ENCODE measurements at regions of chr5 and their contacts with region 1.

Region 1: DNA sequence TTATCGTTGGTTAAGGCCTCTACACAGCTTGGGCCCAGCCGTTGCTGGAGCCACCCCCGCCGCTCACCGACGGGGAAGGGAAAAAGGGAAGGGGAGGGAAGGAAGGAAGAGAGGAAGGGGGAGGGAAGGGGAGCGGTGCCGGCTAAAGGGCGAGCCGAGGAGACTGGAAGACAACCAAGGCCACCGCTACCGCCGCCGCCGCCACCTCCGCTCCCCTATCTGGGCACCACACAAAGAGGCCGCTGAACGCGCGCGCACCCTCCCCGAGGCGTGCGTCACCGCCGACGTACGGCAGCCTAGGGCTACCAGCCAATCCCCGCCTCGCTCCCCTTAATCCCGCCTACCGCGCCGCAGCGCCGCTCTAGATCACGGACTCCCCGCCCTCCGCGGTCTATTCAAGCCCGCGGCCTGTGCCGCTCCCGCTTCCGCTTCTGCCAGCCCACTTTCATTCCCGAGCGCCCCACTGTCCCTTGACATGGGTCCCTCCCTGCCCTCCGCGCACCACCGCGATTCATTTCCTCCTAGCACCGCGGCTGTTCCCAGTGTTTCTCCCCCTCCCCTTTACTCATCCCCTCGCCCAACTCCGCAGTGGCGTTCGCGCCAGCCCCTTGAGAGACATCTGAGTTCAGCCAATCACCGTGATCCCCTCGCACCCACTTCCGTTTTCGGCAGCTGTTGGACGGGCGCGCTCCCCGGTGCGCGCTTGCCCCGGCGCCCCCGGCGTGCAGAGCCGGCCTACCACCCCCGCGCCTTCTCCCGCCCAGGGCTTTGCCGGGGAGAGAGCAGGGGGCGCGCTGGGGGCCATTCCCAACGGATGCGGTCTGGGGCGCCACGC is at the start of gene HNRNPA0:
- DNase-seq: peak; percentile 96
- ATAC-seq: peak; percentile 92
- H3K4me3 Mint-ChIP-seq: peak within 1 kb of the TSS; percentile 95
- H3K27ac Mint-ChIP-seq: peak within 1 kb of the TSS; percentile 100
- H3K4me1 Mint-ChIP-seq: peaks cover 23% of the 10 kb centered on the region
- H3K27me3 Mint-ChIP-seq: peaks cover 29% of the 10 kb centered on the region
- CTCF ChIP-seq: no peak
- total RNA-seq, gene HNRNPA0: 65.6 to 66.6 TPM (median 66.0 TPM) in 3 replicates

Region 2: GRCh38 chr5:137672019-137672418 is 82.3 kb before region 1 on chr5:
- CTCF ChIA-PET with region 1: no interaction called
- POLR2A ChIA-PET with region 1: no interaction called
- DNase-seq: no peak
- ATAC-seq: no peak
- H3K4me3 Mint-ChIP-seq: no peak overlapping the region
- H3K27ac Mint-ChIP-seq: no peak overlapping the region
- H3K4me1 Mint-ChIP-seq: no peaks in the 10 kb centered on the region
- H3K27me3 Mint-ChIP-seq: no peaks in the 10 kb centered on the region
- CTCF ChIP-seq: no peak

Region 3: DNA sequence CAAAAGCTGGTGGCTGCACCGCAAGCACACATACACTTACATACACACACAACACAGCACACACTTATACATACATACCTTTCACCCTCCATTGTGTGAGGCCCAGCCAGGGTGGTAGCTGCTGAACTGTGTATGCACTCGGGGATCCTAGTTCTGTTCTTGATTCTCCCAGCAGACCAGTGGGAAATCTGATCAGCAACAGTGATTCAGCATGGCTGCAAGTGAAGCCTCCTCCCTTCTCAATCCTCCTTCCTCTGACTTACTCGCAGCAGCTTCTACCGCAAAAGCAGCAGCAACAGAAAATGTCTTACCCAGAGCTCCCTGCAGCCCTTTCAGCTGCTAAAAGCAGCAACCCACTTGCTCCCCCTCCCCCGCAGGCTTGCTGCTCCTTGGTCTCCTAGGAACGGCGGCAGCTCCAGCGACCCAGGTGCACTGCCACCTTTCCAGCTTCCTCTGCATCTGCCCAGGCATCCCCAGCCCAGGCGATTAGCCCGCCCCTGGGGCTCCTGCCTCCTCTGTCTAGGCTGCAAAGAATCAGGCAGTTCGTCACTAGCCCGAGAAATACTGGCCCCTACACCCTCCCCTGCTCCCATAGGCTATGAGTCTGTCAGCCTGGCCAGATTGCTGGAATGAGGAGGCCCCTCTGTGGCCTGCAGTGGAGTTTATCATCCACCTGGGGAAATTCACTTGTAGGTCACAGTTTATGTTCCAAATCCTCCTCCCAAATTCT is 18.6 kb before region 1 on chr5 and contains the start of gene KLHL3:
- CTCF ChIA-PET with region 1: interaction called, 26 read pairs
- POLR2A ChIA-PET with region 1: interaction called, 20 read pairs
- DNase-seq: peak; percentile 89
- ATAC-seq: peak; percentile 97
- H3K4me3 Mint-ChIP-seq: no peak within 1 kb of the TSS
- H3K27ac Mint-ChIP-seq: no peak within 1 kb of the TSS
- H3K4me1 Mint-ChIP-seq: peaks cover 3% of the 10 kb centered on the region
- H3K27me3 Mint-ChIP-seq: no peaks in the 10 kb centered on the region; the same call in 1 of the 2 replicates
- CTCF ChIP-seq: no peak
- total RNA-seq, gene KLHL3: 14.7 to 18.2 TPM (median 15.7 TPM) in 3 replicates

Region 4: DNA sequence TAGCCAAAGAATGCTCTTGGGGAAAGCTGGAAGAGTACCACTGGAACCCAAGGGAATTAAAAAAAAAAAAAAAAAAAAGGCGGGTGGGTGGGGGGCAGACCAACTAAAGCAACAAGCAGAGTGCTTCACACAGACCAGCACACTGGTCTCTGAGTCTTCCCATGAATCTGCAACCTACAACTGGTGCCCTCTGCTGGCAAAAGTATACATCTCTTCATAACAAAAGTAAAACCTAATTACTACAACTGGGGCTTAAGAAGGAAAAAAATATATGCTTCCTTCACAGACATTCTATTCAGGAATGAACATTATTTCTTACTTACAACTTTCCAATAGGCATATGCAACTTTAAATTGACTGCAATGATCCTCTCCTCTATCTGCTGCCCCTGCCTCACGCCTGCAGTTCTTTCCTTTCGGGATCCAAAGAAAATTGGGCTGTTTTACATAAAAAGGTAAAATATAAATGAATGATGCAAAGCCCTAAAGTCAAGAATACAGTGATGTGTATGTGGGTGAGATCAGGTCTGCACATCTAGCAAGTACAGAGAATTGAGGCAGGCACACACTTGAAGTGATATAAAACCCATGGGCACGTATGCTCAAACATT is 11.2 kb before region 1 on chr5:
- CTCF ChIA-PET with region 1: interaction called, 26 read pairs
- POLR2A ChIA-PET with region 1: no interaction called
- DNase-seq: peak; percentile 43
- ATAC-seq: peak; percentile 87
- H3K4me3 Mint-ChIP-seq: no peak overlapping the region
- H3K27ac Mint-ChIP-seq: no peak overlapping the region
- H3K4me1 Mint-ChIP-seq: peaks cover 8% of the 10 kb centered on the region; the same call in 1 of the 2 replicates
- H3K27me3 Mint-ChIP-seq: no peaks in the 10 kb centered on the region; the same call in 1 of the 2 replicates
- CTCF ChIP-seq: peak; percentile 37; the same call in 1 of the 2 replicates

Measured in WTC11 (cell line).